ENCODE measurements at regions of chr22 and their contacts with region 1.

Region 1: DNA sequence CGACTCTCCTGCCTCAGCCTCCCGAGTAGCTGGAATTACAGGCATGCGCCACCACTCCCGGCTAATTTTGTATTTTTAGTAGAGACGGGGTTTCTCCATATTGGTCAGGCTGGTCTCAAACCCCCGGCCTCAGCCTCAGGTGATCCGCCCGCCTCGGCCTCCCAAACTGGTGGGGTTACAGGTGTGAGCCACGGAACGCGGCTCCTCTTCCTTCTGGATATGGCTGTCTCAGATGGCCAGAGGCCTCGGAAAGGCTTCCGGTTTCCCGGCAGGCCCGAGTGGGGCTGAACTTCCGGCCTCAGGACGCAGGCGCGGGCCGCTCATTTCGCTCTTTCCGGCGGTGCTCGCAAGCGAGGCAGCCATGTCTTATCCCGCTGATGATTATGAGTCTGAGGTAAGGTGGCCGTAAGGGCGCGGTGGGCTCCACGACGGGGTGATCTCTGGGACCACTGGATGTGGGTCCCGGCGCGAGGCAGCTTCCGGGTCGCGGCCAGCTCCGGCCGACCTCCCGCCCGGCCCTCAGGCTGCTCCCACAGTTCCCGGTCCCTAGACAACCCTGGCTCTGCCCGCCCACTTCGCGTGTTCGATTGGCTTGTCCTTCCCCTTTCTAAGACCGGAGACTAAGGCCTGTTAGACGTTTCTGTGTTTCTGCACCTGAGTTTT is at the start of gene EIF3L:
- DNase-seq: peak; percentile 46 to 92
- H3K4me3 ChIP-seq: peak within 1 kb of the TSS; percentile 73 to 77
- H3K27ac ChIP-seq: peak within 1 kb of the TSS; percentile 81 to 91
- H3K4me1 ChIP-seq: peaks cover 16 to 17% of the 10 kb centered on the region in 2 donors
- H3K27me3 ChIP-seq: no peaks in the 10 kb centered on the region
- CTCF ChIP-seq: no peak
- total RNA-seq, gene EIF3L: 256 TPM

Region 2: GRCh38 chr22:37686002-37686982 is 162.9 kb before region 1 on chr22 and contains the start of gene NOL12:
- intact Hi-C with region 1: loop called (anchors 1 kb)
- DNase-seq: peak; percentile 35 to 88
- H3K4me3 ChIP-seq: peak within 1 kb of the TSS; percentile 63 to 69
- H3K27ac ChIP-seq: peak within 1 kb of the TSS; percentile 83 to 87
- H3K4me1 ChIP-seq: peaks cover 0 to 4% of the 10 kb centered on the region in 2 donors
- H3K27me3 ChIP-seq: no peaks in the 10 kb centered on the region
- CTCF ChIP-seq: no peak
- total RNA-seq, gene NOL12: 4.0 TPM

Region 3: DNA sequence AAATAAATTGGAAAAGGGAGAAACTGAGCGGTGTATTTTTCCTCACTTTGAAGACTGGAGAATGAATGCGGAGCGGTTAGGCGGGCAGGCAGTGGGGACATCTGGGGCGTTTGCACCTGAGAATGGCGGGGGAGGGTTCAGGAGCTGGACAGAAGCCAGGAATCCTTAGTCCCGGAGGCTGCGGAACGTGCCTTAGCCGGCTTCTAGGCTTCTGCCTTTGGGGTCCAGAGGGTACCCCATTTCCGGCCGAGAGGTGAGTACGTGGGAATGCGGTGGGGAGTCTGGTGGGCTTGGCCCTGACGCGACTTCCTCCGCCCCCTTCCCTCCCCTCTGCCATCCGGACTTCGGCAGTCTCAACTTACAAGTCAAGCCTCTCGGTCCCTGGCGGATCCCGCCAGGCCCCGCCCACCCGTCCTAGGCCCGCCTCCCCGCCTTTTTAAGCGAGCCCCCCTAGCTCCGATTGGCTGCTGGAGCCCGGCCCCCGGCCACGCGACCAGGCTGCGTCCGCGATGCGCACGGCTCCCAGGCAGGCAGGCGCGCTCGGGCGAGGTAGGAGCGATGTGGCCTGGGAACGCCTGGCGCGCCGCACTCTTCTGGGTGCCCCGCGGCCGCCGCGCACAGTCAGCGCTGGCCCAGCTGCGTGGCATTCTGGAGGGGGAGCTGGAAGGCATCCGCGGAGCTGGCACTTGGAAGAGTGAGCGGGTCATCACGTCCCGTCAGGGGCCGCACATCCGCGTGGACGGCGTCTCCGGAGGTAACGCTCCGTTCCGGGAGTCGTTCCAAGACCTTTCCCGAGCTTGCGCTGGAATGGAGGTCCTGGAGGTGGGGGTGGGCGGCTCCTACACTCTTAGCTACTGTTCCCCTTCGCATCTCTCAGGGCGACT is 41.6 kb before region 1 on chr22 and contains the start of gene GCAT:
- intact Hi-C with region 1: loop called (anchors 2 kb)
- DNase-seq: peak; percentile 80 to 98
- H3K4me3 ChIP-seq: peak within 1 kb of the TSS; percentile 67 to 72
- H3K27ac ChIP-seq: peak within 1 kb of the TSS; percentile 83 to 89
- H3K4me1 ChIP-seq: peaks cover 6 to 17% of the 10 kb centered on the region in 2 donors
- H3K27me3 ChIP-seq: no peaks in the 10 kb centered on the region
- CTCF ChIP-seq: no peak
- total RNA-seq, gene GCAT: 4.5 TPM

Region 4: GRCh38 chr22:37905534-37906363 is 56.5 kb after region 1 on chr22 and contains the start of gene MICALL1:
- intact Hi-C with region 1: loop called (anchors 2 kb)
- DNase-seq: peak in 1 of 2 donors; percentile 84
- H3K4me3 ChIP-seq: peak within 1 kb of the TSS; percentile 85 to 100
- H3K27ac ChIP-seq: peak within 1 kb of the TSS; percentile 88 to 93
- H3K4me1 ChIP-seq: peaks cover 7 to 29% of the 10 kb centered on the region in 2 donors
- H3K27me3 ChIP-seq: no peaks in the 10 kb centered on the region
- CTCF ChIP-seq: peak in 1 of 3 experiments; percentile 39
- total RNA-seq, gene MICALL1: 43.9 TPM

Region 5: DNA sequence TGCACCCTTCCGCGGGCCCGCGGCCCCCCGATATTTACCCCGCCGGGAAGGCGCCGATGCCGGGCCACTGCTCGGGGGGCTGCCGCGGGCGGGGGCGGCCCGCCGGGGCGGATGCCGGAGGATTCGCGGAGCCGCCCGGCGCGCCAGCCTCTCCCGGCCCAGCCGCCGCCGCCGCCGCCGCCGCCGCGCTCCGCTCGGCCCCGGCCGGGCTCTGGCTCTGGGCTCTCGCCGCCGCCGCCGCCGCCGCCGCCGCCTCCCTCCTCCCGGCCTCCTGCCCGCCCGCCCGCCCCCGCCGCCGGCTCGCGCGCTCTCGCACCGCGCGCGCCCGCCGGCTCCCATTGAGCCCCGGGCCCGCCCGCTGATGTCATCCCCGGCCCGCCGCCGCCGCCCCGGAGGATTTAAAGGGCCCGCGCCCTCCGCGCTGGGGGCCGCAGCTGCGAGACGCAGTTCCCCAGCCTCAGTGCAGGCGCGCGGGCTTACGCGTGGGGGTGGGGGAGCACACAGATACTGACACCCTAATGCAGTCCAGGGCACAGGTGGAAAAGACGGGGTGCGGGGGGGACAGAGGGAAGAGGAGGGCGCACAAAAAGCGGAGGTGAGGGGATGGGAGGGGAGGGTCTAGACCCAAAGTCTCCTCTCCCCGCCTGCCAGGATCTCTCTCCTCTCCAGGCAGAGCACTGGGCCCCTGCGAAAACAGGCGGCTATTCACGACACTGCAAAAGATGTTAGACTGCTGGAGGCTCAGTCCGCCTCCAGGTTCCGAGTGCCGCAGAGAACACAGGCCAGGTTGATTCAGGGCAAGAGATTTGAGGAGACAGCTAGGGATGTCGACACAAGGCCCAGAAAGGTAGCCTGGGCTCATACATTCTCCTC is 468.1 kb after region 1 on chr22 and contains the start of gene CSNK1E:
- intact Hi-C with region 1: loop called (anchors 10 kb)
- DNase-seq: peak; percentile 31 to 88
- H3K4me3 ChIP-seq: peak within 1 kb of the TSS; percentile 69 to 92
- H3K27ac ChIP-seq: peak within 1 kb of the TSS; percentile 97 to 100
- H3K4me1 ChIP-seq: peaks cover 10 to 37% of the 10 kb centered on the region in 2 donors
- H3K27me3 ChIP-seq: no peaks in the 10 kb centered on the region
- CTCF ChIP-seq: no peak
- total RNA-seq, gene CSNK1E: 185 TPM